ENCODE measurements at regions of chr21 and their contacts with region 1.

Region 1: DNA sequence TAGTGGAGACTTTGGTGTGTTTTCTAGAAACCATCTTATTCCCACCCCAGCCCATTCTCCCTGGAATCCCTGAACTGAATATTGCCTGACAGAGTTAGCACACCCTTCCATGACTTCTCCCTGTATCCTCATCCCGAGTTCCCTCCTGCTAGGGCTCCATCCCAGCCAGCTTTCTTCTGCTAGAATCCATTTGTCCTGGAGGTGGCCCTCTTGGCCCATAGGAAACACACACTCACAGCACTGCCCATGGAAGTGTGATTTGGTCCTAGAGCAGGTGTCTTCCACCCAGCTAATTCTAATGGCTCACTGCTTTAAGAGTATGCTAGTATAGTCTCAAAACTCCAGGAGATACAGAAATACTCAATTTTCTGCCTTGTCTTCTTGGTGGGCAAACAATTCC is 4.1 kb downstream of the KRTAP15-1 start:
- DNase-seq: no peak
- ATAC-seq: no peak
- H3K4me3 Mint-ChIP-seq: no peak overlapping the region
- H3K27ac Mint-ChIP-seq: no peak overlapping the region
- H3K4me1 Mint-ChIP-seq: no peaks in the 10 kb centered on the region
- H3K27me3 Mint-ChIP-seq: no peaks in the 10 kb centered on the region
- CTCF ChIP-seq: no peak

Region 2: GRCh38 chr21:30491963-30492428 is 47.8 kb after region 1 on chr21 and contains the start of gene KRTAP19-3:
- CTCF ChIA-PET with region 1: no interaction called
- POLR2A ChIA-PET with region 1: no interaction called
- intact Hi-C with region 1: loop called (anchors 10 kb)
- DNase-seq: no peak
- ATAC-seq: no peak
- H3K4me3 Mint-ChIP-seq: no peak within 1 kb of the TSS
- H3K27ac Mint-ChIP-seq: no peak within 1 kb of the TSS
- H3K4me1 Mint-ChIP-seq: no peaks in the 10 kb centered on the region
- H3K27me3 Mint-ChIP-seq: no peaks in the 10 kb centered on the region
- CTCF ChIP-seq: no peak
- total RNA-seq, gene KRTAP19-3: not detected in 2 replicates